ENCODE measurements at regions of chr17 and their contacts with region 1.

Region 1: DNA sequence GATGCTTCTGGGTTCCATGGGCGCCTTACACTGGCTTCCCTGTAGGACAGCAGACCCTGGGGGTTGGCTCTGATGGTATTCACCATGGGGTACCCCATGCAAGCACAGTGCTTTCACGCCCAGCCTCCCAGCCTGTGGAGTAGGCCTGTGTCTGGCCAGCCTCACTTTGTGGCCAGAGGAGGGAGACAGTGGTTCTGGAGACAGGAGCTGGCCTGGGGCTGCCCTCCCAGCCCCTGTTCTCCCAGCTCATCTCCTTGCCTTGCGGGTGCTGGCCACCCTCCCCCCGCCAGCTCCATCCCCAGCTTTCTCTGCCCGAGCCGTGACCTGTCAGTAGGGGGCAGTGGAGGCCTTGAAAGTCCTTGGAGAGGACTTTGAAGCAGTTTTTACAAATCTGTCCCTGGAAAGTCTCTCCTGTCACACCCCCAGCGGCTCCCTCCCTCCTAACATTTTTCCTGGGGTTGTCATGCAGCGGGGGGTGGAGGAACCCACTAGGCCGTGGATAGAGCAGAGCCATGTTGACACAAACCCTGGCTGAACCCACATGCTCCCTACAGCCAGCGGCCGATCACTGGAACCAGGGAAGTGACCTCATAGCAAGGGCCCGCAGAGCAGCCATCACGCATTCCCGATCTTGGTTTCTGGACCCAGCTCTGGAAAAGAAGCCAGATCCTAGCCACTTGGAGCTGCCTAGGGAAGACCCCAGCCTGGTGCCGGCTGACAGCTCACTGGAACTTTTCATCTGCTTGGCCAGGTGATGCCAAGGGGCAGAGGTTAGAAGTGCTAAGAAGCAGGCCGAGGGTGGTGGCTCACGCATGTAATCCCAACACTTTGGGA is 289.4 kb downstream of the SEC14L1 start:
- DNase-seq: peak; percentile 90 to 92
- H3K4me3 ChIP-seq: no peak overlapping the region
- H3K4me3 Mint-ChIP-seq: no peak overlapping the region
- H3K27ac Mint-ChIP-seq: no peak overlapping the region
- H3K4me1 ChIP-seq: peaks cover 21% of the 10 kb centered on the region
- H3K4me1 Mint-ChIP-seq: peaks cover 24% of the 10 kb centered on the region
- H3K27me3 ChIP-seq: no peaks in the 10 kb centered on the region
- H3K27me3 Mint-ChIP-seq: no peaks in the 10 kb centered on the region
- CTCF ChIP-seq: peak; percentile 78 to 82

Region 2: GRCh38 chr17:77061669-77062068 is 368.5 kb before region 1 on chr17:
- CTCF ChIA-PET with region 1: no interaction called
- POLR2A ChIA-PET with region 1: no interaction called
- intact Hi-C with region 1: no loop called
- DNase-seq: no peak
- H3K4me3 ChIP-seq: no peak overlapping the region
- H3K4me3 Mint-ChIP-seq: no peak overlapping the region
- H3K27ac Mint-ChIP-seq: no peak overlapping the region
- H3K4me1 ChIP-seq: no peaks in the 10 kb centered on the region
- H3K4me1 Mint-ChIP-seq: peaks cover 3% of the 10 kb centered on the region
- H3K27me3 ChIP-seq: no peaks in the 10 kb centered on the region; the same call in 1 of the 2 replicates
- H3K27me3 Mint-ChIP-seq: no peaks in the 10 kb centered on the region
- CTCF ChIP-seq: no peak

Region 3: DNA sequence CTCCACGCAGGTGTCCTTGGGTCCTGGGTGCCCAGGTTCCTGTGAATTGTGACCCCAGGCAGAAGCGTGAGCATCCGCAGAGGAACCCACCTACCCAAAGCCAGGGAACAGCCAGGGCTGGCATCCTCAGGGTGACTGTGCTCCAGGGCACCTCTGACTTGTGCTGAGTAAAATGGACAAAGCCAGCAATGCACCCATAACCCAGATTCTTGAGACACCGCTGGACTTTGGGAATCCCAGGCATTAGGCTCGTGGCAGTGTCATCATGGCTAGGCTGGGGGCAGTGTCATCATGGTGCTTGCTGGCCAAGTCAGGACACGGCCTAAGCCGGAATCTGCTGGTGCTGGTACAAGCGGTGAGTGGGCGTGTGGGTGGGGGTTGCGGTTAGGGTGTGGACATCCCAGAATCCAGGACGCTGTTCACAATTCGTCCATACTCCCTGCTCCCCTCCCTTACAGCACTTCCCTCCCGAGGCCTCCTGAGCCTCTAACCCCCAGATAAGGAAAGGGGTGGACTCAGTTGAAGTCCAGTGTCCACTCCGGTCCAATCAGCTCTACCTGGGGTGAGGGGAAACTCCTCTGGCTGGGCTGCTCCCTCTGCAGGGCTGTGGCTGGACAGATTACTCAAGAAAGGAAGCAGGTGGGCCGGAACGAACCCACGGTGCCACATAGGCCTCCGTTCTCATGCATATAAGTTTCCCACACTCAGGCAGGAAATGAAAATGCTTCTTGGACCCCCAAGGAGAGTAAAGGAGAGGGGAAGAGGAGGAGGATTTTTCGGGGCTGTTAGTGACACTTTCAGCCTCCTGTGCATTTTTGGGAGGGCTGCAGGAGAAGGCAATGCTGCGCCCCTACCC is 150.5 kb before region 1 on chr17:
- CTCF ChIA-PET with region 1: interaction called, 6 read pairs
- POLR2A ChIA-PET with region 1: no interaction called
- intact Hi-C with region 1: loop called (anchors 5 kb)
- DNase-seq: peak; percentile 80 to 86
- H3K4me3 ChIP-seq: no peak overlapping the region
- H3K4me3 Mint-ChIP-seq: peak overlapping the region; percentile 82
- H3K27ac Mint-ChIP-seq: peak overlapping the region; percentile 2
- H3K4me1 ChIP-seq: peaks cover 39% of the 10 kb centered on the region
- H3K4me1 Mint-ChIP-seq: peaks cover 23% of the 10 kb centered on the region
- H3K27me3 ChIP-seq: no peaks in the 10 kb centered on the region
- H3K27me3 Mint-ChIP-seq: no peaks in the 10 kb centered on the region
- CTCF ChIP-seq: peak in 1 of 2 experiments; percentile 25

Region 4: DNA sequence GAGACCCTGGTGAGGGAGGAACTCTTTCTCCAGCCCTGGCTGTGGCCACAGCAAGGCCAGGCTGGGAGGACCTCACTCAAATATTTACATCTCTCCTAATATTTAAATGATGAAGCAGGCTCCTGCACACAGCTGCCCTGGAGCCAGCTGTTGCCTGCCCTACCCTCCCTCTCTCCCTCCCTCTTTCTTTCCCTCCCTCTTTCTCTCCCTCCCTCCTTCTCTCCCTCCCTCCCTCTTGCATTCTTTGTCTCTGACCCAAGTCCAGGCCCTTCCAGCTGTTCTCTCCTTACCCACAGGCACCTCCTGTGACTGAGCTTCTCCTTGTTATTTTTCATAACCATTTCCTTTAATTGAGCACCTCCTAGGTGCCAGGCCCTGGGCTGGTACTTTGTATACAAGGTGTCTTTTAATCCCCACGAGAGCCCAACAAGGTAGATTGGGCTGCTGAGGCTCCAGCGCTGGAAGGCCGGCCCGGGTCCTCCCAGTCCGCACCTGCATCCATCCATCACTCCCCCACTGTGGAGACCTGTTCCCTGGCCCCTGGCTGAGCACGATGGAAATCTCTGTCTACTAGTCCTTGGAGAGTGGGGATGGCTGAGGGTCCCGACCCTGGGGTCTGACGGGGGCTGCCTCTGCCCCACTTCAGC is 47.0 kb before region 1 on chr17:
- CTCF ChIA-PET with region 1: interaction called, 10 read pairs
- POLR2A ChIA-PET with region 1: no interaction called
- intact Hi-C with region 1: no loop called
- DNase-seq: no peak
- H3K4me3 ChIP-seq: no peak overlapping the region
- H3K4me3 Mint-ChIP-seq: no peak overlapping the region
- H3K27ac Mint-ChIP-seq: peak overlapping the region; percentile 87
- H3K4me1 ChIP-seq: peaks cover 56% of the 10 kb centered on the region
- H3K4me1 Mint-ChIP-seq: peaks cover 38% of the 10 kb centered on the region
- H3K27me3 ChIP-seq: no peaks in the 10 kb centered on the region
- H3K27me3 Mint-ChIP-seq: no peaks in the 10 kb centered on the region
- CTCF ChIP-seq: no peak

Region 5: GRCh38 chr17:77451245-77451893 is 21.2 kb after region 1 on chr17:
- CTCF ChIA-PET with region 1: interaction called, 31 read pairs
- POLR2A ChIA-PET with region 1: interaction called, 5 read pairs
- intact Hi-C with region 1: no loop called
- DNase-seq: peak; percentile 91
- H3K4me3 ChIP-seq: peak overlapping the region; percentile 77
- H3K4me3 Mint-ChIP-seq: peak overlapping the region; percentile 88
- H3K27ac Mint-ChIP-seq: peak overlapping the region; percentile 95
- H3K4me1 ChIP-seq: peaks cover 39% of the 10 kb centered on the region
- H3K4me1 Mint-ChIP-seq: peaks cover 43% of the 10 kb centered on the region
- H3K27me3 ChIP-seq: no peaks in the 10 kb centered on the region
- H3K27me3 Mint-ChIP-seq: no peaks in the 10 kb centered on the region
- CTCF ChIP-seq: no peak

Region 6: GRCh38 chr17:77494664-77495435 is 64.7 kb after region 1 on chr17:
- CTCF ChIA-PET with region 1: interaction called, 36 read pairs
- POLR2A ChIA-PET with region 1: interaction called, 3 read pairs
- intact Hi-C with region 1: loop called (anchors 1 kb)
- DNase-seq: peak; percentile 79 to 88
- H3K4me3 ChIP-seq: no peak overlapping the region
- H3K4me3 Mint-ChIP-seq: no peak overlapping the region
- H3K27ac Mint-ChIP-seq: peak overlapping the region; percentile 83
- H3K4me1 ChIP-seq: no peaks in the 10 kb centered on the region
- H3K4me1 Mint-ChIP-seq: peaks cover 7% of the 10 kb centered on the region
- H3K27me3 ChIP-seq: no peaks in the 10 kb centered on the region
- H3K27me3 Mint-ChIP-seq: no peaks in the 10 kb centered on the region
- CTCF ChIP-seq: peak; percentile 94 to 96

Region 7: GRCh38 chr17:77585142-77585860 is 155.2 kb after region 1 on chr17:
- CTCF ChIA-PET with region 1: no interaction called
- POLR2A ChIA-PET with region 1: no interaction called
- intact Hi-C with region 1: no loop called
- DNase-seq: no peak
- H3K4me3 ChIP-seq: no peak overlapping the region
- H3K4me3 Mint-ChIP-seq: no peak overlapping the region
- H3K27ac Mint-ChIP-seq: no peak overlapping the region
- H3K4me1 ChIP-seq: no peaks in the 10 kb centered on the region
- H3K4me1 Mint-ChIP-seq: no peaks in the 10 kb centered on the region
- H3K27me3 ChIP-seq: no peaks in the 10 kb centered on the region; the same call in 1 of the 2 replicates
- H3K27me3 Mint-ChIP-seq: peaks cover 7% of the 10 kb centered on the region
- CTCF ChIP-seq: no peak

Measured in Caco-2 (cell line).